GM13977 (cell line): ENCODE measurements at regions of chr1 and their contacts with region 1.

Region 1: GRCh38 chr1:181189691-181190363 is 101.3 kb downstream of the IER5 start:
- DNase-seq: peak; percentile 88
- CTCF ChIP-seq: peak; percentile 100

Region 2: GRCh38 chr1:181044449-181044966 is 145.3 kb before region 1 on chr1:
- in situ Hi-C with region 1: no loop called
- DNase-seq: peak; percentile 72
- CTCF ChIP-seq: no peak

Region 3: DNA sequence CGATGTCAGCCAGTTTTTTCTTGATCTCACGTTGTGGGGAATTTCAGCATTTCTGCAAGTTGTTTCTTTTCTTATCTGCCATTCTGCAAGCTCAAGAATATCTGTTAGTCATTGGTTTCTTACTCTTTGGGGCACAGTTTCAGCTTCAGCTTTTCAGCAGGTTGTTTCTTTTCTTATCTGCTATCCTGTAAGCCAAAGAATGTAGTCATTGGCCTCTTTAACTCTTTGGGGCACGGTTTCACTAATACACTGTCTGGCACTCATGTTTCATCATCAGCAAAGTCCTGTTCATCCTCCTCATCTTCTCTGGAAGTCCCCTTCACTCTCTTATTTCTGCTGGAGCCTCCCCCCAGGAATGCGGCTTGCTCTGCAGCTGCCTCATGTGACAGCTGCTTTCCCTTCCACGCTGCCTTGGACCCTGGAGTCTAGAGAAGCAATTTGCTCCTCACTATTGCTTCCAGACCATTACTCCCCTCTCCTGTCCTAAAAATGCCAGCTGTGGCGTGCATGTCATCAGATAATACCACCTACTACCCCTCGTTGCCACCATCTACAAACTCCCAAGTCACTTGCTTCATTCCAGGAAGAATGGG is 226.5 kb after region 1 on chr1:
- in situ Hi-C with region 1: loop called (anchors 10 kb)
- DNase-seq: no peak
- CTCF ChIP-seq: no peak

Region 4: DNA sequence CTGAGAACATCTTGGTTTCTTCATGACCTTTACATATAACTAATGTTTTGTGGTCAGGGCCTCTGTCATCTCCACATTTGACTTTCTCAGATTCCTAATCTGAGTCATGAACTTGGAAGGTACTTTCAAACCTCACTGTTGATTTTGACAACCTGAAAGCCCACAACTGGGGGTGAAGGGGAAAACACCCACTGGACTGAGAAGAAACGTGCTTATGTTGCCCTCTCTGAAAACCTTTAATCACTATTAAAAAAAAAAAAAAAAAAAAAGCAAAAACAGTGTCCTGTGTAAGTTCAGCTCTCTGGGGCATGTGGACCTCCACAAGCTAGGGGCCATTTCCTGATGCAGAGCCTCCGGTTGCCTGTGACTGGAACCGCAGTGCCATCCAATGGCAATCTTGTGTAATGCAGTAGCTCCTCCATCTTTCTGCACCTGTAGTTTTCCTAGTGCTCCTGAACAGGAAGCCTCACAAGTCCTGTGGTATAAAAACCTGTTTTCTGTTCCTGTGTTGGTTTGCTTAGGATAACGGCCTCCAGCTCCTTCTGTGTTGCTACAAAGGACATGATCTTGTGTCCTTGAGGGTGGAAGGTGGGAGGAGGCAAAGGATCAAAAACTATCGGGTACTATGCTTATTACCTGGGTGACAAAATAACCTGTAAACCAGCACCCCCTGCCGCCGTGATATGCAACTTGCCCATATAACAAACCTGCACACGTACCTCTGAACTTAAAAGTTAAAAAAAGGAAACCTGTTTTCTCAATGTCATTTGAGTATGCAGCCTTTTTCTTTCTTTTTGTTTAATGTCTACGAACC is 747.1 kb after region 1 on chr1:
- in situ Hi-C with region 1: loop called (anchors 25 kb)
- DNase-seq: peak; percentile 73
- CTCF ChIP-seq: peak; percentile 92